ENCODE measurements at regions of chr6 and their contacts with region 1.

Region 1: DNA sequence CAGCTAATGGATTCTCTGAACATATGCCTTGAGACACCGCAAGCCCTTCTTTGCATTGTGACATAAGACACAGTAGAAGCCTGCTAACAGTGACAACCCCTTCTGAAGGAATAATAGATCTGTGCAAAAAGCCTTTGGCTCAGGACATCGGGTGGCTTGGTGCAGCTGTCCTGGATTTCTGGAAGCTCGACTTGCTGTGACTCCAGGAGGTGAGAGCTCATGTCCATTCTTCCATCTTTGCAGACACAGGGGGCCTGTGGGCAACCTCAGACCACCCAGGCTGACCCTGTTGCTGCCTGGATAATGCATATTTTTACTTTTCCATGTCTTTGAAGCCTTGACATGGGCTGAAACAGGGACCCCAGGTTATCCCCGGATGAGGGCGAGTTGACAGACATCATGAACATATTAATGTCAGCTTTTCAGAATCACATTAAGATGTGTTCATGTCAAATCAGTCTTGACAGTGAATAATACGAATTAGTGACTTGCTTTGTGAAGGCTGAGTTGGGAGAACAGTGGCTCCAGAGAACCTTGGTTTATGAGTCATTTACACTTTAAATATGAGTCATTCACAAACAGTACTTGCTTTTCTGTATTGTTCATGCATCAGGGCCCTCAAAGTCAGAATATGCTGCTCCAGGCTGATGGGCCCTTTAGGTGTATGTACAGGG is 66.8 kb upstream of the IYD start:
- DNase-seq: peak; percentile 46
- H3K4me3 Mint-ChIP-seq: no peak overlapping the region
- H3K27ac Mint-ChIP-seq: no peak overlapping the region
- H3K4me1 Mint-ChIP-seq: peaks cover 8% of the 10 kb centered on the region
- H3K27me3 Mint-ChIP-seq: peaks cover 34% of the 10 kb centered on the region

Region 2: DNA sequence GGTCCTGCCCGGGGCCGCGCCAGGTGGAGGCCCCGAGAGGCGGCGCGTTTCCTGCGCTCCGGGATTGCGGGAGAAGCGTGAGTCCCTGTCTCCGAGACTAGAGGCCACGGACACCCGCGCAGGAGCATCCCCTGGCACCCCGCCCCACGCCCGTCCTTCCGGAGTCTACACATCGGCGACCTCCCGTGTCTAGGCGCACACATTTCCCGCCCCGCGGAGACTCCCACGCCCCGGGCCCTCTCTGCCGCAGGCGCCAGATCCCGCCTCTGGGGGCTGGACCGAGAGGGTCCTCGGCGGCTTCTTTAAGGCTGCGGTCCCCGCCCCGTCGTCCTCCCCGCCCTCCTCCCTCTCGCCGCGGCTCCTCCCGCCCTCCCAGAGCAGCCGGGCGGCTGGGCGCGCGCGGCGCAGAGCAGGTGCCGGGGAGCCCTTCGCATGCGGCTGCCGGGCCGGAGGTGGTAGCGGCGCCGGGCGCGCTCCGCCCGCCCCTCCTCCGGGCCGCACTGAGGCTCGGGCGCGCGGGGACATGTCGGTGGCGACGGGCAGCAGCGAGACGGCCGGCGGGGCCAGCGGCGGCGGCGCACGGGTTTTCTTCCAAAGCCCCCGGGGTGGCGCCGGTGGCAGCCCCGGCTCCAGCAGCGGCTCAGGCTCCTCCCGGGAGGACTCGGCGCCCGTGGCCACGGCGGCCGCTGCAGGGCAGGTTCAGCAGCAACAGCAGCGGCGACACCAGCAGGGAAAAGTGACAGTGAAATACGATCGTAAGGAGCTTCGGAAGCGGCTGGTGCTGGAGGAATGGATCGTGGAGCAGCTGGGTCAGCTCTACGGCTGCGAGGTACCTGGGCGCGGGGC is 159.1 kb before region 1 on chr6 and contains the start of gene PPP1R14C:
- CTCF ChIA-PET with region 1: no interaction called
- POLR2A ChIA-PET with region 1: no interaction called
- intact Hi-C with region 1: loop called (anchors 10 kb)
- DNase-seq: peak; percentile 29
- H3K4me3 Mint-ChIP-seq: peak within 1 kb of the TSS; percentile 45
- H3K27ac Mint-ChIP-seq: no peak within 1 kb of the TSS
- H3K4me1 Mint-ChIP-seq: peaks cover 18% of the 10 kb centered on the region
- H3K27me3 Mint-ChIP-seq: peaks cover 72% of the 10 kb centered on the region
- total RNA-seq, gene PPP1R14C: 0.21 to 0.36 TPM

Region 3: GRCh38 chr6:150212778-150213177 is 89.2 kb before region 1 on chr6:
- CTCF ChIA-PET with region 1: no interaction called
- POLR2A ChIA-PET with region 1: no interaction called
- intact Hi-C with region 1: no loop called
- DNase-seq: no peak
- H3K4me3 Mint-ChIP-seq: no peak overlapping the region
- H3K27ac Mint-ChIP-seq: no peak overlapping the region
- H3K4me1 Mint-ChIP-seq: no peaks in the 10 kb centered on the region
- H3K27me3 Mint-ChIP-seq: peaks cover 11% of the 10 kb centered on the region

Region 4: DNA sequence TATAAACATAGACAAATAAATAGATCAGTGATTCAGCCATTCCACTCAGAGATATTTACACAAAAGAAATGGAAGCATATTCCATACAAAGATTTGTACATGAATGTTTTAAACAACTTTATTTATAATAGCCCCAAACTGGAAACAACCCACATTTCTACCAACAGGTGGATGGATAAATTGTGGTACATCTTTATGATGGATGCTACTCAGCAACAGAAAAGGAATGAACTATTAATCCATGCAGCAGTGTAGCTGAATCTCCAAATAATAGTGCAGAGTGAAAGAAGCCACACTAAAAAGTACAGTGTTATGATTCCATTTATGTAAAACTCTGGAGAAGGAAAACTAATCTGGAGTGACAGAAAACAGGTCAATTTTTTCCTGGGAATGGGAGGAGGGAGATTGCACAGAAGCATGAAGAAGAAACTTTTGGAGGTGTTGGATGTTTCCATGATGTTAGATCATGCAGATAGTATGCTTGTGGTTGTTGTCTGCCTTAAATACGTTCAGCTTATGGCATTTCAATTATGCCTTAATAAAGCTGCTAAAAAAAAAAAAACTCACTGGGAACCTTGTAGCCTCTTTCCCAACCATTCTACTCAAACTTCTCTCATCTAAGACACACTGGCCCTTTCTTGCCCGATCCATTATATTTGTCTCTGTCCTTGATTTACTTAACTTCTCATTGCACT is 58.2 kb before region 1 on chr6:
- CTCF ChIA-PET with region 1: no interaction called
- POLR2A ChIA-PET with region 1: no interaction called
- intact Hi-C with region 1: loop called (anchors 5 kb)
- DNase-seq: no peak
- H3K4me3 Mint-ChIP-seq: no peak overlapping the region
- H3K27ac Mint-ChIP-seq: no peak overlapping the region
- H3K4me1 Mint-ChIP-seq: peaks cover 13% of the 10 kb centered on the region
- H3K27me3 Mint-ChIP-seq: peaks cover 20% of the 10 kb centered on the region

Region 5: DNA sequence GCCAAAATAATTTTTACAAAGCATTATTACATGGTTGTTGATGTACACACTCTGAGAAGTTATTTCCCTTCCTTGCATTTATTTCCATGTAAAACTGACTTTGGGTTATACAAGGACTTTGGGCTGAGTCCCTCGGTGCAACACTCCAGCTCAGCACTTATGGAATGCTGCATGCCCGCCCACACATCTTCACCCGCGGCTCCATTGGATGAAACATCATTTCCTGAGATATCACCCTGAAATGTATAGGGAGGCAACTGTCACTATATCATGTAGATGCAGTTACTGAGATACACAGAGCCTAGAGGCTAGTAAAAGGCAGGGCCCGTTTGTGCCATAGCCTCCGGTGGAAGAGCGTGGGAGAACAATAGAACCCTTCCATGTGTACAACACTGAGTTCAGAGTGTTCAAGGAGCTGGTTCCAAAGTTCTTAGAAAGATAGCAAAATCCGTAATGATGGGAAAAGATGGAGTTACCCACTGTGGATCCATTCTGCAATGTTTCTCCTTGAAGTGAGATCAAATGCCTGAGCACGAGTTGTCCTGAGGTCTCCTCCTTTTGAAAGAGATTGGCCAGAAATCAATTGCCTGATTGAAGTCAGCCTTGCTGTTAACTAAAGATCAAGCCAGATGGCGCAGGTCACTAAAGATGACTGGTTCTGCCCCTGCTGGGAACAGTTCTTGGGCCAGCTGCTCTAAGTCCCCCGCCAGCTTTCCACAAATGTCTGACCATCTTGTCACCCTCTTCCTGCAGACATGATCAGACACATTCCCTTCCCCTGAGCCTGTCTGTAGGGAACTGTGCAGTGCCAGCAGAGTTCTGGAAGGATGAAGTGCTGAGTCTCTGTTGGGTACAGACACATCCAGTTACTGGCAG is 34.1 kb before region 1 on chr6:
- CTCF ChIA-PET with region 1: no interaction called
- POLR2A ChIA-PET with region 1: no interaction called
- intact Hi-C with region 1: no loop called
- DNase-seq: no peak
- H3K4me3 Mint-ChIP-seq: no peak overlapping the region
- H3K27ac Mint-ChIP-seq: no peak overlapping the region
- H3K4me1 Mint-ChIP-seq: peaks cover 7% of the 10 kb centered on the region
- H3K27me3 Mint-ChIP-seq: peaks cover 4% of the 10 kb centered on the region

Measured in activated CD4-positive, alpha-beta memory T cell treated with anti-CD3 and anti-CD28 coated beads for 36 hours (primary cell).